ENCODE measurements at regions of chr16 and their contacts with region 1.

Region 1: DNA sequence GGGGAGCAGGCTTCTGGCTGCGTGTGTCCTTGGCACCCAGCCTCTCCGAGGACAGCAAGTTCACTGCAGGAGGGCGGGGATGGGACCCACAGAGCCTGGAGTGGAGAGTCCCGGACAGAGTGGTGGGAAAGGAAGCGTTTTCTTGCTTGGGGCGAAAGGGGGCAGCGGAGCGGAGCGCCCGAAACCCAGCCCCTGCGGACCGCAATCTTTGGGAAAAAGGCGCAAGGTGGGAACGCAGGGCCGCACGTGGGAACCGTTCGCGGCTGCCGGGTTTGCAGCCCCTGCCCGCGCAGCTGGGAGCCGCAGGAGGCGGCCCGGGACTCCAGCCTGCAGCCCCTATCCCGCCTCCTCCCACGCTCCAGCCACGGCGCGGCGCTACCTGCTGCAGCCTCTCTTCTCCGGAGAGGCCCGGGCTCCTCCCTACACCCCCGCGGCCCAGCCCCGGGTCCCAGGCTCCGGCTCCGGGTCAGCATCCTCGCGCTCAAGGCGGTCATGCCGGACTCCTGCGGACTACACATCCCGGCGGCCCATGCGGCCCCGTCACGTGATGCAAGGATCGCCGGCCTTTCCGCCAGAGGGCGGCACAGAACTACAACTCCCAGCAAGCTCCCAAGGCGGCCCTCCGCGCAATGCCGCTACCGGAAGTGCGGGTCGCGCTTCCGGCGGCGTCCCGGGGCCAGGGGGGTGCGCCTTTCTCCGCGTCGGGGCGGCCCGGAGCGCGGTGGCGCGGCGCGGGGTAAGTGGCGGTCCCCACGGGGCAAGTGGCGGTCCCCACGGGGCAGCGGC is at the starts of genes NTHL1 and TSC2:
- DNase-seq: peak; percentile 78 to 96 (median 90)
- ATAC-seq: peak; percentile 90
- H3K4me3 ChIP-seq: peak within 1 kb of the TSS; percentile 96
- H3K4me3 Mint-ChIP-seq: peak within 1 kb of the TSS; percentile 93
- H3K27ac ChIP-seq: peak within 1 kb of the TSS in 1 of 2 donors; percentile 29
- H3K27ac Mint-ChIP-seq: peak within 1 kb of the TSS; percentile 56
- H3K4me1 ChIP-seq: peaks cover 33% of the 10 kb centered on the region
- H3K4me1 Mint-ChIP-seq: peaks cover 23% of the 10 kb centered on the region
- H3K27me3 ChIP-seq: no peaks in the 10 kb centered on the region
- H3K27me3 Mint-ChIP-seq: no peaks in the 10 kb centered on the region
- CTCF ChIP-seq: peak; percentile 57
- total RNA-seq, gene NTHL1: 2.7 to 2.9 TPM
- total RNA-seq, gene TSC2: 83.0 to 85.0 TPM

Region 2: GRCh38 chr16:1413684-1414531 is 633.6 kb before region 1 on chr16:
- CTCF ChIA-PET with region 1: no interaction called
- POLR2A ChIA-PET with region 1: no interaction called
- intact Hi-C with region 1: loop called in 1 of 2 experiments (anchors 5 kb)
- DNase-seq: peak; percentile 45 to 82 (median 62)
- ATAC-seq: peak; percentile 63
- H3K4me3 ChIP-seq: peak overlapping the region; percentile 77
- H3K4me3 Mint-ChIP-seq: peak overlapping the region; percentile 90
- H3K27ac ChIP-seq: peak overlapping the region in 1 of 2 donors; percentile 77
- H3K27ac Mint-ChIP-seq: peak overlapping the region; percentile 85
- H3K4me1 ChIP-seq: peaks cover 29% of the 10 kb centered on the region
- H3K4me1 Mint-ChIP-seq: peaks cover 21% of the 10 kb centered on the region
- H3K27me3 ChIP-seq: no peaks in the 10 kb centered on the region
- H3K27me3 Mint-ChIP-seq: no peaks in the 10 kb centered on the region
- CTCF ChIP-seq: peak; percentile 65

Region 3: GRCh38 chr16:1959269-1960049 is 88.1 kb before region 1 on chr16 and contains the start of gene NDUFB10:
- CTCF ChIA-PET with region 1: interaction called, 4 read pairs
- POLR2A ChIA-PET with region 1: interaction called, 11 read pairs
- intact Hi-C with region 1: loop called in 1 of 2 experiments (anchors 5 kb)
- DNase-seq: peak; percentile 81 to 96 (median 92)
- ATAC-seq: peak; percentile 86
- H3K4me3 ChIP-seq: peak within 1 kb of the TSS; percentile 94
- H3K4me3 Mint-ChIP-seq: peak within 1 kb of the TSS; percentile 91
- H3K27ac ChIP-seq: peak within 1 kb of the TSS; percentile 66 to 72
- H3K27ac Mint-ChIP-seq: peak within 1 kb of the TSS; percentile 98
- H3K4me1 ChIP-seq: peaks cover 55% of the 10 kb centered on the region
- H3K4me1 Mint-ChIP-seq: peaks cover 42% of the 10 kb centered on the region
- H3K27me3 ChIP-seq: no peaks in the 10 kb centered on the region
- H3K27me3 Mint-ChIP-seq: no peaks in the 10 kb centered on the region
- CTCF ChIP-seq: peak; percentile 83
- total RNA-seq, gene NDUFB10: 40.7 to 41.1 TPM

Region 4: DNA sequence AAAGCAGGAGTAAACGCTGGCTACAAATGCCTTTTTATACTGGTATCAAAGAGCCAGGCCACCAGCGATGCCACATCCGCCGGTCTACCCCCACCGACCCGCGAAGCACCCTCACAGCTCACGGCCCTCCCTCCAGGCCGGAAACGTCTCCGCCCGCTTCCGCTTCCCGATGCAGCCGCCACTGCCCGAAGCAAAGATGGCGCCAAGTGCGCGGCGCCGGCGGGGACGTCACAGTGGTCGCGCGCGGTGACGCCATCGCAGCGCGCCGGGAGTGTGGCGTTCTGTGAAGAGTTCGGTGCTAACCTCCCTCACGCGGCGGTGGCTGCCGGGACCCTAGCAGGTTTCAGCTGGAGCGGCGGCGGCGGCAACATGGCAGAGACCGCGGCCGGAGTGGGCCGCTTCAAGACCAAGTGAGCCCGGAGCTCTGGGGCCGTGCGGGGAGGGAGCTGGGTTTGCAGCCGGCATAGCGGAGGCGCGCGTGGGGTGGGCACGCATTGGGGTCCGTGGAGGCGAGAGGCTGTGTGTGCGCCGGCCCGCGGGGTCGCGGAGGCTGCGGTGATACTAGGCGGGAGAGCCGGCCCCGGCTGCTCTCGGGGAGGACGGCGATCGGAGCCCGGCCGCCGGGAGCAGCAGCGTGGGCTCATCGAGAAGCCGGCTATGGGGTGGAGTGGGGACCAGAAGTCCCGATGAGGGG is 75.6 kb before region 1 on chr16 and contains the start of gene TBL3:
- CTCF ChIA-PET with region 1: no interaction called
- POLR2A ChIA-PET with region 1: interaction called, 3 read pairs
- intact Hi-C with region 1: loop called in 1 of 2 experiments (anchors 5 kb)
- DNase-seq: peak; percentile 92 to 98 (median 96)
- ATAC-seq: peak; percentile 97
- H3K4me3 ChIP-seq: peak within 1 kb of the TSS; percentile 73
- H3K4me3 Mint-ChIP-seq: peak within 1 kb of the TSS; percentile 97
- H3K27ac ChIP-seq: peak within 1 kb of the TSS; percentile 87 to 92
- H3K27ac Mint-ChIP-seq: peak within 1 kb of the TSS; percentile 97
- H3K4me1 ChIP-seq: peaks cover 36% of the 10 kb centered on the region
- H3K4me1 Mint-ChIP-seq: peaks cover 20% of the 10 kb centered on the region
- H3K27me3 ChIP-seq: no peaks in the 10 kb centered on the region
- H3K27me3 Mint-ChIP-seq: no peaks in the 10 kb centered on the region
- CTCF ChIP-seq: no peak
- total RNA-seq, gene TBL3: 12.7 to 15.5 TPM

Region 5: DNA sequence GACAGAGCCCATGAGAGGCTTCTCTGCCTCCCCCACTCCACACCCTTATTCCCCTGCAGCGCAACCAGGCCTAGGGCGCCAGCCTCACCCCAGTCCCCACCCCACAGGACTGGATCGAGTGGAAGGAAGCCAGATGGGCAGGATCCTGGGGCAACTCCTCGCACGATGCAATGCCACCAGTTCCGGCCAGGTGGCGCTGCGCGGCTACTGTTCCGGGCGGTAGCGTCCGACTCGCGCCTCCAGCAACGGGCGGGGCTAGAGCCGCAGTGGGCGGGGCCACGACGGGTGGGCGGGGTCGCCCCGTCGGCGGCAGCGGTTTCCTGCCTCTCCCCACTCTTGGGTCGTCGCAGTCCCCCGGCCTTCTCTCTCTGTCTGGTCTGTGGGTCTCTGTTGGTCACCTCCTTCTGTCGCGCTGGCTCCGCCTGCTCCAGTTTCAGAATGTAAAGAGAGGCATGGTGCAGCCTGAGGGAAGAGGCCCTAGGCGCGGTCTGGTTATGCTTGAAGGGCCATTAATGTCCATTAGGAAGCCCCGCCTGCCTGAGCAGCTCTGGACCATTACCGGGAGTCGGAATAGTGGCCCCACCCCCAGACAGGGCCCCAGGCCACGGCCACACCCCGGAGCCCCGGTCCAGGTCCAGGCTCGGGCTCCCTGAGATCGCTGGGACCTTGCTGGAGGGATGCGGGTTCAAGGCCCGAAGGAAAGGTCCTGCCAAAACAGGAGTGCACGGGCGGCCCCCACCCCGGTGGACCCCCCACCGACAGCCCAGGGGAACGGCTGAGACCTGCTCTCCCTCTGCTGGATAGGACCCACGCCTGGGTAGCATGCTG is 24.2 kb before region 1 on chr16:
- CTCF ChIA-PET with region 1: interaction called, 5 read pairs
- POLR2A ChIA-PET with region 1: interaction called, 4 read pairs
- intact Hi-C with region 1: loop called in 1 of 2 experiments (anchors 1 kb)
- DNase-seq: peak; percentile 87 to 99 (median 96)
- ATAC-seq: peak; percentile 92
- H3K4me3 ChIP-seq: peak overlapping the region; percentile 31
- H3K4me3 Mint-ChIP-seq: peak overlapping the region; percentile 72
- H3K27ac ChIP-seq: peak overlapping the region in 1 of 2 donors; percentile 43
- H3K27ac Mint-ChIP-seq: peak overlapping the region; percentile 66
- H3K4me1 ChIP-seq: peaks cover 50% of the 10 kb centered on the region
- H3K4me1 Mint-ChIP-seq: peaks cover 19% of the 10 kb centered on the region
- H3K27me3 ChIP-seq: peaks cover 25 to 33% of the 10 kb centered on the region in 2 experiments
- H3K27me3 Mint-ChIP-seq: peaks cover 29% of the 10 kb centered on the region
- CTCF ChIP-seq: peak; percentile 90

Region 6: GRCh38 chr16:2682209-2683021 is 634.9 kb after region 1 on chr16 and contains the start of gene KCTD5:
- CTCF ChIA-PET with region 1: no interaction called
- POLR2A ChIA-PET with region 1: no interaction called
- intact Hi-C with region 1: loop called in 1 of 2 experiments (anchors 5 kb)
- DNase-seq: peak; percentile 93 to 97 (median 94)
- ATAC-seq: peak; percentile 96
- H3K4me3 ChIP-seq: peak within 1 kb of the TSS; percentile 100
- H3K4me3 Mint-ChIP-seq: peak within 1 kb of the TSS; percentile 96
- H3K27ac ChIP-seq: peak within 1 kb of the TSS; percentile 73 to 77
- H3K27ac Mint-ChIP-seq: peak within 1 kb of the TSS; percentile 91
- H3K4me1 ChIP-seq: peaks cover 32% of the 10 kb centered on the region
- H3K4me1 Mint-ChIP-seq: peaks cover 20% of the 10 kb centered on the region
- H3K27me3 ChIP-seq: no peaks in the 10 kb centered on the region
- H3K27me3 Mint-ChIP-seq: no peaks in the 10 kb centered on the region
- CTCF ChIP-seq: no peak
- total RNA-seq, gene KCTD5: 20.6 to 22.6 TPM

Measured in CD4-positive, alpha-beta T cell (primary cell).